PC-9 (cell line): ENCODE measurements at regions of chr16 and their contacts with region 1.

Region 1: DNA sequence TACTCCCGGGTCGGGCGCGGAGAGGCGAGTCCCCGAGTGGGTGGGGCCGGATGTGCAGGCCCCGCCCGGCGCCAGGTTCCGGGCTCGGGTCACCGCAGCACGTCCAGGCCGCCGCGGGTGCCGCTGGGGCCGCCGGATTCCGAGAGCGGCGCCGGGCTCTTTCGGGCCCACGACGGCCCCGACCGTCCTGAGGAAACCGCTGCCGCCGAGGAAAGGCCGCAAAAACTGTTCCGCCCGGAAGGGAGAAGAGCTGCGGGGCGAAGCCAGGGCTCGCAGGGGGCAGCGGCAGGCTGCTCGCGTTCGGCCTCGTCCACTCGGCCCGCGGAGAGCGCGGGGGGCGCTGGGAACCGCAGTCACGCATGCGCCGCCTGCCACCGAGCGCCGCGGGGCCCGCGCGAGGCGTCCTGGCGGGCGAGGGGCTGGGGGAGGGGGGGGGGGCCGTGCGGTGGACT is at the start of gene ZKSCAN2:
- DNase-seq: peak; percentile 72 to 94
- H3K4me3 ChIP-seq: peak within 1 kb of the TSS; percentile 89
- H3K27ac ChIP-seq: peak within 1 kb of the TSS; percentile 96
- H3K4me1 ChIP-seq: peaks cover 21% of the 10 kb centered on the region
- H3K27me3 ChIP-seq: no peaks in the 10 kb centered on the region
- CTCF ChIP-seq: no peak
- total RNA-seq, gene ZKSCAN2: 4.5 and 6.5 TPM in 2 replicates

Region 2: DNA sequence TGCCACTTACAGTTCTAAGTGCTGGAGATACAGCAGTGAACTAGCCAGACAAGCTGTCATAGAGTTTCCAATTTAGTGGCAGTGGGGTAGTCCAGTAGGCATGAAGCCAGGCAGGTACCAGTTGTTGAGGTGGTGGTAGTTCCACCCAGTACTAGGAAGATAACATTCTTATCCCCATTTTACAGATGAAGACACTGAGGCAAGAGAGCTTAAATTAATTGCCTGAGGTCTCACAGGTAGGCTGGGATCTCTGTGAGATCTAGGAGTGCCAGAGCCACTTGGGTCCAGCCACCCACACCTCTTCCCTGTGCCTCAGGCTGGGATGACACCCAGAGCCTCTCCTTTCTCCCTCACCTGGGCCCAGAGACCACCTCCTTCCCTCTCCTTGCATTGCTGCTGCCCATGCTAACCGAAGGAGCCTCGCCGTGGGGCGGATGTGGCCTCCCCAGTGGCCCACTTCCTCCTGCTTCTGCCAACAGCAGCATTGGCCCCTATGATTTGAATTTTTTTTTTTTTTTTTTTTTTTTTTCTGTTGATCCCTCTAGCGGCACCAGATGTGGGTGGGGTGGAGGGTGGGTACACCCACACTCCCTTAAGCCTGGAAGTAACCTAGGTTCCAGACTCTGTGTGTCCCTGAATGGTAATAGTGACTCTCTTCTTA is 1307.8 kb before region 1 on chr16:
- CTCF ChIA-PET with region 1: no interaction called
- POLR2A ChIA-PET with region 1: no interaction called
- intact Hi-C with region 1: no loop called
- DNase-seq: no peak
- H3K4me3 ChIP-seq: no peak overlapping the region
- H3K27ac ChIP-seq: no peak overlapping the region
- H3K4me1 ChIP-seq: no peaks in the 10 kb centered on the region
- H3K27me3 ChIP-seq: peaks cover 49% of the 10 kb centered on the region
- CTCF ChIP-seq: no peak

Region 3: GRCh38 chr16:24539291-24539849 is 718.2 kb before region 1 on chr16 and contains the start of gene RBBP6:
- CTCF ChIA-PET with region 1: no interaction called
- POLR2A ChIA-PET with region 1: no interaction called
- intact Hi-C with region 1: loop called (anchors 5 kb)
- DNase-seq: peak; percentile 84 to 97
- H3K4me3 ChIP-seq: peak within 1 kb of the TSS; percentile 98
- H3K27ac ChIP-seq: peak within 1 kb of the TSS; percentile 92
- H3K4me1 ChIP-seq: peaks cover 26% of the 10 kb centered on the region
- H3K27me3 ChIP-seq: no peaks in the 10 kb centered on the region
- CTCF ChIP-seq: peak; percentile 42; the same call in 1 of the 2 replicates
- total RNA-seq, gene RBBP6: 76.6 and 86.7 TPM in 2 replicates

Region 4: DNA sequence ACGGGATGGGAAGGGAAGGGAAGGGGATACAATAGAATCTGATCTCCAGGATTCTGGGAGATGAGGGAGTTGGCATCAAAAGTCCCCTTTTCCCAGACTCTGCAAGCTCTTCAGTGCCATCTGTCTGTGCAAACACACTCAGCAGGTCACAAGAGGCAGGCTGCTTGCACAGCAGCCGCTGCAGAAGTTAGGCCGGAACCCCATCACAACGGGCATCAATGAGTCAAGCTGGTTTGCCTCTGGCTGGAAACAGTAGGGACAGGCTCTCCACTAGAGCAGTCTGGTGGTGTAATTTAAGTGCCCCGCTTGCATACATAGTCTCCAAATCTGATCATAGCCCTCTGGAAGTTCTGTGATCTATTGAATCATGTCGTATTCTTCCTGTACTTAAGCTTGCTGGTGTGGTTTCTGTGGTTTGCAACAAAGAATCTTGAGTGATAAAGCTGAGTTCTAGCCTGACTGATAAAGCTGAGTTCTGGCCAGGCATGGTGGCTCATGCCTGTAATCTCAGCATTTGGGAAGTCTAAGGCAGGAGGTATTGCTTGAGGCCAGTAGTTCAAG is 1912.1 kb after region 1 on chr16:
- CTCF ChIA-PET with region 1: interaction called, 10 read pairs
- POLR2A ChIA-PET with region 1: no interaction called
- intact Hi-C with region 1: no loop called
- DNase-seq: peak; percentile 53 to 71
- H3K4me3 ChIP-seq: no peak overlapping the region
- H3K27ac ChIP-seq: no peak overlapping the region
- H3K4me1 ChIP-seq: 0 out of 2 replicates have a peak, but pooled peaks cover 4% of the 10 kb centered on the region
- H3K27me3 ChIP-seq: peaks cover 34% of the 10 kb centered on the region
- CTCF ChIP-seq: no peak; the same call in 1 of the 2 replicates